Aorta (tissue), 5 donors: ENCODE measurements at regions of chr11 and their contacts with region 1.

Region 1: DNA sequence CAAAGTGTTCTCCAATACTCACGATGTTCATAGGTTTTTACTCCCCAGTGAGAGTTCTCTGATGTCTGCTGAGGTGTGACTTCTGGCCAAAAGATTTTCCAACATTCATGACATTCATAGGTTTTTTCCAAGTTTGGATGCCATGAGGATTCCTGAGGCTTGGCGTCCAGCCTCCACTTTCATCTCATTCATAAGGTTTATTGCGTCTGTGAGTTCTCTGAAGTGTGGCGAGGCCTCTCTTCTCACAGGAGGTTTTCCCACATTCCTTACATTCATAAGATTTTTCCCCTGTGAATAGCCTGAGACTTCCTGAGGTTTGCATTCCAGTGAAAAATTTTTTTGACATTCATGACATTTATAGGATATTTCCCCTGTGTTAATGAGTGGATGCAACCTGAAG is 1014.1 kb downstream of the LRRC4C start:
- DNase-seq: no peak
- ATAC-seq: no peak
- H3K4me3 ChIP-seq: no peak overlapping the region
- H3K27ac ChIP-seq: no peak overlapping the region
- H3K4me1 ChIP-seq: no peaks in the 10 kb centered on the region
- H3K27me3 ChIP-seq: no peaks in the 10 kb centered on the region

Region 2: DNA sequence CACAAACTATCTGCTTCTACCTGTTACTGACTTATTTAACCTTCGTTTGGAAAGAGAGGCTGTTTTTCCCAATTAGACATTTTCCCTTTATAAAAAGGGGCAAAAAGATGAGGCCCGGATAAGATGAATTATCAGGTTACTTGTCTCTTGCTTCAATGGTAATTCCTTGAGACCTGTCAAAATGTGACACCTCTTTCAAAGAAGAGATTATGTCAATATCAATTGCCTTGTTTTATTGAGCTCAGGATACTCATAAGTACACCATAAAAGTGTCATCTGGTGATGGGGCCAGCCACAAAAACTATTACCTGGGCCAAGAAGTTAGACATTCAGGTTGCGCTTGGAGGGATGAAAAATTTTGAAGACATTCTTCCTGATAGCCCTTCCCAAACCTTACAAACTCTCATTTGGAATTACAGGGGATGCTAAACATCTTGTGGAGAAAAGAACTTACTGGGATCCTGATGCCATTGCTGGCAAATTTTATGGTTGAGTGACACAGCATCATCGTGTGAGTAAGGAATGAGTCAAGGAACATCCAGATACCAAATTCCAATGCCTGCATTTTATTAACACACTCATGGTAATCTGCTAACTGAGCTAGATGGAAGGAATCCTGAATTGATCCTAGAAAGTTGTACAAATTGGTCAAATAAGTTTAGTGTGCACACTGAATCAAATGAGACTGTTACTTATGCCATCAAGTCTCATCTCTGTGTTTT is 57.1 kb before region 1 on chr11:
- intact Hi-C with region 1: loop called in 1 of 2 experiments (anchors 10 kb)
- DNase-seq: no peak
- ATAC-seq: no peak
- H3K4me3 ChIP-seq: no peak overlapping the region
- H3K27ac ChIP-seq: no peak overlapping the region
- H3K4me1 ChIP-seq: no peaks in the 10 kb centered on the region
- H3K27me3 ChIP-seq: no peaks in the 10 kb centered on the region